Activated T-helper 2 cell treated with anti-CD3 and anti-CD28 coated beads, Interferon-gamma antibody, Interleukin-2, Interleukin-4, amounts not matched to agents 10 μg/mL and 5 μg/mL and 100 μg/mL, durations not matched to agents 14 hours and 24 hours and 36 hours (primary cell): ENCODE measurements at regions of chr3 and their contacts with region 1.

Region 1: DNA sequence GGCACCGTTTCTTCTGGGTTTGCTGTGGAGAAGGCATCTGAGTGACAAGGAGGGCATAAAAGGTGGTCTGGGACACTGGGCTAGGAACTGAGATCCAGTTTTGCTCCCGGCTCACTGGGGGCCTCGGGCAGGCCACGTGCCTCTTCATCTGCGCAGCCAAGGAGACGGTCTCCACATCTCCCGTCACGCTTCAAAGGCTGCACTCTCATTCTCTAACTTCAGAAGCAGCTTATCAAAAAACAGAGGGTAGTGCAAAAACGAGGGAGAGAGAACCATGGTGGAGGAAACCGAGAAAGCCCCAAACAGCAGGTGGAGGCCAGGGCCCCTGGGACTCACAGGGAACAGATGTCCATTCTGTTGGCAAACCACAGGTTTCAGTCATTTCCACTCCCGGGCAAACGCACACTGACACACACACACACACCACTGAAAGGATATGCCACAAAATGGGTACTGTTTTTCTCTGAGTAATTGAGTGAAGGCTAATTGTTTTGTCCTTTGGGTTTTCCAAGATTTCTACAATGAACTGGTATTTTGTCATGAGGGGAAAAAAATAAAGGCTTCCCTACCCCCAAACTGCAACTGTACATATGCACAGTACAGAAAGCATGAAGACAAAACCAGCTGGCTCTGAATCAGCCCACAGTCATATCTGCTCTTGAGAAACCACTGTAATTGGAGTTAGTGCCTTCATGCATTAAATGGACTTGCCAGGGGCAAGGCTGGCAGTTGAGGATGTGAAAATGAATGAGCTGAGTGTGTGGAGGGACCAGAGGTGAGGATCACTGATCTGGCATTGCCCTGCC is 71.9 kb downstream of the MGLL start:
- DNase-seq: no peak
- H3K4me3 Mint-ChIP-seq: peak overlapping the region; percentile 41
- H3K27ac Mint-ChIP-seq: peak overlapping the region; percentile 72
- H3K4me1 Mint-ChIP-seq: peaks cover 35% of the 10 kb centered on the region
- H3K27me3 Mint-ChIP-seq: peaks cover 2% of the 10 kb centered on the region

Region 2: DNA sequence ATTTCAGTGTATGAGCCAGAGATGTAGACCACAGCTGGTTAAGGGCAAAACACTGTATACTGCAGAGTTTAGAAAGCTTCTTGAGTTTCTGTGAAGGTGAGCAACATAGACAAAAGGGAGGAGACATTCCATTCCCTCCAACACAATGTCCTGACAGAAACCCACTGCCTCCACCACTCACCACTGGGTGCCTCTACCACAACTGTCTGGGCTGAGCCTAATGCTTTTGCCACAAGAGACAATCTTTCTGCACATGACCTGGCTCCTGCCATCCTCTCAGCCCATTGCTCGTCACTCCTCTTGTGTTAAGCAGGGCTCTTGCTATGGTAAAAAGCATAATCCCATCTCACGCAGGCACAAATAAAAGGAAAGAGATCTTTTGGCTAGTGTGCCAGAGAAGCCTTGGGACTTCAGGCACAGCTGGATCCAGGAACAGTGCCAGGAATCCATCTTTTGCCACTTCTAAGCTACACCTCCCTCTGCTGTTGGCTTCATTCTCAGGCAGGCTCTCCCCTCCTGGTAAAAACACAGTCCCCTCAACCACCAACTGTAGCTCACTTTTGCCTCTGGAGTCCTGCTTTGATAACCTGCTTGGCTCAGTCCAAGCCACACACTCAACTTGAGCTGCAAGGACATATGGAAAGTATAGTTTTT is 322.0 kb before region 1 on chr3:
- intact Hi-C with region 1: no loop called
- DNase-seq: no peak
- H3K4me3 Mint-ChIP-seq: no peak overlapping the region
- H3K27ac Mint-ChIP-seq: no peak overlapping the region
- H3K4me1 Mint-ChIP-seq: no peaks in the 10 kb centered on the region
- H3K27me3 Mint-ChIP-seq: peaks cover 18% of the 10 kb centered on the region

Region 3: DNA sequence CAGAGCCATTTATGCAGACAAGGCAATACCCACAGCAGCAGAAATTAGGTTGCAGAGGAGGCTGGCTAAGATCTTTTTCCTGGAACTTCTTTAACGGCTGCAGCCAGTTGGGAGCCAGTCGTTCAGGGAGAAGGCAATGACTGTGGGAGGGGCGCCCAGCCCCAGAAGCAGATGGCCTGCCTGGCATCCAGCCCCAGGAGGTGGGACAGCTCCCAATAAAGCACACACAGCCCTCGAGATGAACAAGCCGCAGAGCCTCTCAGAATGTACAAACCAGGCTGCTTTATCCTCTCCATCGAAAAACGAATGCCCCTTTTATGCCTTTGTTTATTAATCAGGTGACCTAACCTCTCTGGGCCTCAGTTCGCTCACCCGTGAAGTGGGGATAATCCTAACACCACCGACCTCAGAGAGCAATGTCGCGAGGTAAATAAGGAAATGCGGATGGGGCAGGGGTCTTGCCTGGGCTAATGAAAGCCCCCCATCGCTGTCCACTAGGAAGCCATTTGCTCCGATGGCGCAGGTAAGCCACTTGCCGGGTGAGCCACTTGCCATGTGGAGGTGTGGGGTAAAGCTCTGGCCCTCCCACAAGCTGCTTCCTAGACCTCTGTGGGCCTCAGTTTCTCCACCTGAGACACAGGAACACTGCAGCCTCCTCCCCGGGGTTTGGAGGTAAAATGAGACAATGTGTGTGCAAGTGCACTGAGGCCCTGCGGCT is 36.1 kb after region 1 on chr3:
- intact Hi-C with region 1: no loop called
- DNase-seq: no peak
- H3K4me3 Mint-ChIP-seq: no peak overlapping the region
- H3K27ac Mint-ChIP-seq: no peak overlapping the region
- H3K4me1 Mint-ChIP-seq: peaks cover 7% of the 10 kb centered on the region
- H3K27me3 Mint-ChIP-seq: peaks cover 1% of the 10 kb centered on the region

Region 4: DNA sequence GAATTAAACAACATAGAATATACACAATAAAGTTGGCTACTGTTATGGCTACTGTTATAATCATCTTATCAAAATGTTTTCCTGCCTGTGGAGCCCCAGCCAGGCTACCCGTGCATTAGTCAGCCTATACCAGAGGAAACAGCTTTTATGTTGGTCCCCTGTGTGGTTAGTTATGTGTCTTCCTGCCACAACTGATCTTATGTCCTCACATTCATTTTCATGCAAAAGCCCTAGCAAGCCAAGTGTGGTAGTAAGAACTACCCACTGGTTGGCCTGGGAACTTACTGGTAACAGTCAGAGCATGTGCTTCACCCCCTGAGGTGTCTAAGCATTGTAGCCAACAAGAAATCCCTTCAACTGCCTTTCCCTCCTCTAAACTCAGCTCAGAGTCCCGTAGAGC is 50.1 kb after region 1 on chr3:
- intact Hi-C with region 1: loop called (anchors 5 kb)
- DNase-seq: peak; percentile 32
- H3K4me3 Mint-ChIP-seq: peak overlapping the region; percentile 43
- H3K27ac Mint-ChIP-seq: peak overlapping the region; percentile 94
- H3K4me1 Mint-ChIP-seq: peaks cover 15% of the 10 kb centered on the region
- H3K27me3 Mint-ChIP-seq: no peaks in the 10 kb centered on the region

Region 5: DNA sequence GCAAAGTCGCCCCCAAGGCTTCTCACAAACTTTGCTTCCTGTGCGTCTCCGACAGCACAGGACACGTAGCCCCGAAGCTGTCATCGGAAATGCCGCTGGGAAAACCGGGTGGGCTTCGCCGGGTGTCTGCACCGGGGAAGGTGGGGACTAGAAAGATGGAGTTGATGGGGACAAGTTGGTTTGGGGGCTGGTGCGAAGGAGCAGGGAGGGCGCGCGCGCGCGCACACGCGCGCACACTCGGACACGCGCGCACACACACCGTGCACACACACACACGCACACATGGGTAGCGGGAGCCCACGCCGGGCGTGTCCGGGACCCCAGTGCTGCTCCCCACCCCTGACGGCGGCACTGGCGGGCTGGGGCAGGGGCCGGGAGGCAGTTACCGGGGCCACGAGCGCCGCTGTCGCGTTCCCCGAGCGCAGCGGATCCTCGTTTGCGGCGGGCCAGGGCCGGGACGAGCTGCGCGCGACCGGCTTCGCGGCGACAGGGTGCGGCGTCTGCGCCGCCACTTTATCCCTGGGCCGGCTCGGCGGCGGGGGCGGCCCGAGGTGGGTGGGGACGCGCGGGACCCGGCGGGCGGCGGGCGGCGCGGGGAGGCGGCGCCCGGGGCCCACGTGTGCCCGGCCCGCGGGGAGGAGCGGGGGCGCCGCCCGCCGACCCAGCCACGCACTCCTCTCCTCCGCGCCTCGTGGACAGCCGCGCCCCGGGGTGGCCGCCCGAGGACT is 72.4 kb after region 1 on chr3:
- intact Hi-C with region 1: loop called (anchors 5 kb)
- DNase-seq: peak; percentile 17
- H3K4me3 Mint-ChIP-seq: peak overlapping the region; percentile 90
- H3K27ac Mint-ChIP-seq: peak overlapping the region; percentile 76
- H3K4me1 Mint-ChIP-seq: peaks cover 31% of the 10 kb centered on the region
- H3K27me3 Mint-ChIP-seq: peaks cover 47% of the 10 kb centered on the region

Region 6: DNA sequence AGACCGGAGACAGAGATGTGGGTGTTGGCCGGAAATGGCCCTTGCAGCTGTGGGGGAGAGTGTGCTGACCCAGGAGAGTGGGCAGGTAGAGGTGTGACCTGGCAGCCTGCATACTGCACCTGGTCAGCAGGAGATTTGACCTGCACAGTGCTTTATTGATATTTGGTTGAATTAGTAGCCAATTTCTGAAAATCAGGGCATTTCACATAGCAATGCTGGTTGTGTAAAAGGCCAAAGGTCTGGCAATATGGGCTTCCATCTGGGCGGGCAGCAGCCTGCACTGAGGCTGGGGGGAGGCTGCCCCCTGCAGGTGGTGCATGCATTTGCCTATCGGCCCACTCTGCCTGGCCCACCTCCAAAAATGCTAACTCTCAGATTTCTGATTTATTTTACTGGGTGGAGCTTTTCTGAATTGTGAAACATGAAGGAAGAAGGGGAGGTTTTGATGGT is 81.3 kb after region 1 on chr3:
- intact Hi-C with region 1: loop called (anchors 2 kb)
- DNase-seq: no peak
- H3K4me3 Mint-ChIP-seq: no peak overlapping the region
- H3K27ac Mint-ChIP-seq: no peak overlapping the region
- H3K4me1 Mint-ChIP-seq: peaks cover 8% of the 10 kb centered on the region
- H3K27me3 Mint-ChIP-seq: peaks cover 6% of the 10 kb centered on the region

Region 7: GRCh38 chr3:128153156-128154041 is 403.0 kb after region 1 on chr3 and contains the start of gene EEFSEC:
- intact Hi-C with region 1: loop called (anchors 5 kb)
- DNase-seq: peak; percentile 82
- H3K4me3 Mint-ChIP-seq: peak within 1 kb of the TSS; percentile 83
- H3K27ac Mint-ChIP-seq: peak within 1 kb of the TSS; percentile 91
- H3K4me1 Mint-ChIP-seq: peaks cover 17% of the 10 kb centered on the region
- H3K27me3 Mint-ChIP-seq: no peaks in the 10 kb centered on the region
- total RNA-seq, gene EEFSEC: 22.0 and 23.8 TPM in 2 replicates